Activated T-helper 2 cell treated with anti-CD3 and anti-CD28 coated beads, Interferon-gamma antibody, Interleukin-2, Interleukin-4, amounts not matched to agents 10 μg/mL and 5 μg/mL and 100 μg/mL, durations not matched to agents 14 hours and 24 hours and 36 hours (primary cell): ENCODE measurements at regions of chr7 and their contacts with region 1.

Region 1: GRCh38 chr7:157690833-157691585 is 354.2 kb downstream of the DNAJB6 start:
- DNase-seq: no peak
- H3K4me3 Mint-ChIP-seq: peak overlapping the region; percentile 33
- H3K27ac Mint-ChIP-seq: no peak overlapping the region
- H3K4me1 Mint-ChIP-seq: peaks cover 7% of the 10 kb centered on the region
- H3K27me3 Mint-ChIP-seq: peaks cover 60% of the 10 kb centered on the region

Region 2: GRCh38 chr7:157010588-157011332 is 680.2 kb before region 1 on chr7 and contains the start of gene MNX1:
- intact Hi-C with region 1: loop called (anchors 5 kb)
- DNase-seq: peak; percentile 43
- H3K4me3 Mint-ChIP-seq: peak within 1 kb of the TSS; percentile 39
- H3K27ac Mint-ChIP-seq: no peak within 1 kb of the TSS
- H3K4me1 Mint-ChIP-seq: peaks cover 6% of the 10 kb centered on the region
- H3K27me3 Mint-ChIP-seq: peaks cover 72% of the 10 kb centered on the region
- total RNA-seq, gene MNX1: 0.09 TPM in 1 of 2 replicates, not detected in the other